Aorta (tissue), 5 donors: ENCODE measurements at regions of chr10 and their contacts with region 1.

Region 1: GRCh38 chr10:94069884-94070283 is 76.2 kb downstream of the PLCE1 start:
- DNase-seq: no peak
- ATAC-seq: no peak
- H3K4me3 ChIP-seq: no peak overlapping the region
- H3K27ac ChIP-seq: no peak overlapping the region
- H3K4me1 ChIP-seq: peaks cover 0 to 3% of the 10 kb centered on the region in 2 donors
- H3K27me3 ChIP-seq: no peaks in the 10 kb centered on the region

Region 2: DNA sequence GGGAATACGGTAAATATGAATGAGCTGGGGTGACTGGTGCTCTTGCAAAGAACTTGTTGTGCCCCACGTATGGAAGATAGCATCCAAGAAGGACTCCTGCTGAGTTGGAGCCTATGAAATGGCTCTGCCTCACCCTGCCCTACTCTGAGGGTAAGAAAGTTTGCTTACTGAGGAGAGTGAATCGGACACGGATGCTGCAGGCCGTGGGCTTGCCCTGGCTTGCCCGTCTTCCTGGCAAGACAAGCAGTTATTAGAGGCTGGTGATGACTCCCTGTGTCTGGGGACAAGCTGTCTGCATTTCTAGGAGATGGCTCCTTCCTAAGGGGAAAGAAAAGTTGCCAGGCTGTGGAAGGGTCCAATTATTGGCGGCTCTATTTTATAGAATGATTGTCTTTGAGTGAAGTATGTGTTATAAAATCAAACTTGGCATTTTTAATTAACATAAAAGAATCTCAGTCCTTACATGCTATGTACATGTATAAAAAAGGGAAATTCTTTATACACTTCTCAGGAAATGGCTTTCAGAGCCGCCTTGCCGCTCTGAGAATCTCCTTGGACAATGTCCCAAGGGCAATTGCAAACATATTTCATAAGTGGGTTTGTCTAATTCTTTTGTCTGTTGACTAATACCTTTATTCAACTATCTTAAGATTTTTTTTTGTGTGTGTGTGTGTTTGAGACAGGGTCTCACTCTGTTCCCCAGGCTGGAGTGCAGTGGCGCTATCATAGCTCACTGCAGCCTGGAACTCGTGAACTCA is 931.6 kb before region 1 on chr10:
- intact Hi-C with region 1: no loop called
- DNase-seq: no peak
- ATAC-seq: no peak
- H3K4me3 ChIP-seq: no peak overlapping the region
- H3K27ac ChIP-seq: no peak overlapping the region
- H3K4me1 ChIP-seq: no peaks in the 10 kb centered on the region
- H3K27me3 ChIP-seq: no peaks in the 10 kb centered on the region

Region 3: GRCh38 chr10:93916257-93917063 is 153.4 kb before region 1 on chr10:
- intact Hi-C with region 1: loop called in 1 of 2 experiments (anchors 5 kb)
- DNase-seq: no peak
- ATAC-seq: no peak
- H3K4me3 ChIP-seq: no peak overlapping the region
- H3K27ac ChIP-seq: no peak overlapping the region
- H3K4me1 ChIP-seq: no peaks in the 10 kb centered on the region
- H3K27me3 ChIP-seq: no peaks in the 10 kb centered on the region

Region 4: GRCh38 chr10:93926613-93927012 is 143.3 kb before region 1 on chr10:
- intact Hi-C with region 1: no loop called
- DNase-seq: no peak
- ATAC-seq: no peak
- H3K4me3 ChIP-seq: no peak overlapping the region
- H3K27ac ChIP-seq: no peak overlapping the region
- H3K4me1 ChIP-seq: no peaks in the 10 kb centered on the region
- H3K27me3 ChIP-seq: no peaks in the 10 kb centered on the region